ENCODE measurements at regions of chr7 and their contacts with region 1.

Region 1: DNA sequence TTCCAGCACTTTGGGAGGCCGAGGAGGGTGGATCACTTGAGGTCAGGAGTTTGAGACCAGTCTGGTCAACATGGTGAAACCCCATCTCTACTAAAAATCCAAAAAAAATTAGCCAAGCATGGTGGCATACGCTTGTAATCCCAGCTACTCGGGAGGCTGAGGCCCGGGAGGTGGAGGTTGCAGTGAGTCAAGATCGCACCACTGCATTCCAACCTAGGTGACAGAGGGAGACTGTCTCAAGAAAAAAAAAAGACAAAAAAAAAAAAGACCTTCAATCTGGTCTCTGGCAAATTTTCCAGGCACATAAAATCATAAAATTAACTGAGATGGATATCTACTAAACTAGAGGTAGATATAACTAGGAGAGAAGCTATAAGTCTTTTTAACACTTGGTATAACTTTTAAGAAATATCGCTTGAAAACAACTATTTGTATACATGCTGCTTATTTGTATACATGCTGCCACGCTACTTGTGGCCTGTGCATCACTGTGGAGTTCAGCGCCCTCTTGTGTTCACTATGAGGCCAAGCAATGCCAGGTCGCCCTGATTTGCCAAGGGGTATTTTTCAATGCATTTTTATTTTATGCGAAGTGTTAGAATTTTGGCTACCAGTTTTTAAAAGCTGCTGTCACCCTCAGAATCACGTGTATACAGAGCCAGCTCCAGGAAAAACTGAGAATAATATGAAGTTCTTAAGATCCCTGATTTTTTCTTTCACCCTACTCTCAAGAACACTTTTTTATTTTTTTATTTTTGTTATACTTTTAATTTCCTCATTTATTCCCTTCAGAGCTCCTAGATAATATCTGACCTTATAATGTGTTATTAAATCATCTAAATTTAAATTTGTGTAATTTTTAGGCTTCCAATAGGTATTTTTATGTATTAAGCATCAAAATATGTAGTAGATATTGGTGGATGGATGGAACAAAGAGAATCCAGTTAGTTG is 26.7 kb downstream of the CYCS start:
- DNase-seq: peak; percentile 81 to 83
- ATAC-seq: peak; percentile 72 to 81; a peak in 3 of 6 replicates
- H3K4me3 ChIP-seq: no peak overlapping the region
- H3K27ac ChIP-seq: 0 out of 6 replicates have a peak overlapping the region, but pooled peaks of 1 of the 2 experiments have one; percentile 21
- H3K4me1 ChIP-seq: peaks cover 6% of the 10 kb centered on the region; the same call in 1 of the 3 replicates
- CTCF ChIP-seq: peak; percentile 95
- EP300 ChIP-seq: no peak
- POLR2A ChIP-seq: no peak
- RAD21 ChIP-seq: peak; percentile 85 to 88

Region 2: DNA sequence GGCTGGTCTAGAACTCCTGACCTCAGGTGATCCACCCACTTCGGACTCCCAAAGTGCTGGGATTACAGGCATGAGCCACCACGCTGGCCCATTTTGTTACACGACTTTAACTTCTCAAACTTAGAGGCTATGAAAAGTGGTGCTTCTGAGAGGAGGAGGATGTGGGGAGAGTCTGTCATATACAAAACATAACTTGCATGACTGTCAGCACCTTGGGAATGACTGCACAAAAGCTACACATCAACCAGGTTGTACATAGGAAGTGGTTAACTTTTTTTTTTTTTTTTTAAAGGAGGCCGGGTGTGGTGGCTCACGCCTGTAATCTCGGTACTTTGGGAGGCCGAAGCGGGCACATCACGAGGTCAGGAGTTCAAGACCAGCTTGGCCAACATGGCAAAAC is 297.7 kb before region 1 on chr7:
- CTCF ChIA-PET with region 1: interaction called, 280 read pairs
- POLR2A ChIA-PET with region 1: no interaction called
- DNase-seq: no peak
- ATAC-seq: no peak
- H3K4me3 ChIP-seq: no peak overlapping the region
- H3K27ac ChIP-seq: no peak overlapping the region
- H3K4me1 ChIP-seq: no peaks in the 10 kb centered on the region
- CTCF ChIP-seq: no peak
- EP300 ChIP-seq: no peak
- POLR2A ChIP-seq: no peak
- RAD21 ChIP-seq: no peak

Region 3: GRCh38 chr7:24825931-24826661 is 272.3 kb before region 1 on chr7:
- CTCF ChIA-PET with region 1: interaction called, 84 read pairs
- POLR2A ChIA-PET with region 1: interaction called, 15 read pairs
- DNase-seq: peak; percentile 82 to 86
- ATAC-seq: peak; percentile 80 to 89; a peak in 5 of 6 replicates
- H3K4me3 ChIP-seq: no peak overlapping the region
- H3K27ac ChIP-seq: peak overlapping the region; percentile 77 to 85
- H3K4me1 ChIP-seq: peaks cover 59% of the 10 kb centered on the region
- CTCF ChIP-seq: no peak
- EP300 ChIP-seq: no peak
- POLR2A ChIP-seq: no peak
- RAD21 ChIP-seq: no peak

Region 4: DNA sequence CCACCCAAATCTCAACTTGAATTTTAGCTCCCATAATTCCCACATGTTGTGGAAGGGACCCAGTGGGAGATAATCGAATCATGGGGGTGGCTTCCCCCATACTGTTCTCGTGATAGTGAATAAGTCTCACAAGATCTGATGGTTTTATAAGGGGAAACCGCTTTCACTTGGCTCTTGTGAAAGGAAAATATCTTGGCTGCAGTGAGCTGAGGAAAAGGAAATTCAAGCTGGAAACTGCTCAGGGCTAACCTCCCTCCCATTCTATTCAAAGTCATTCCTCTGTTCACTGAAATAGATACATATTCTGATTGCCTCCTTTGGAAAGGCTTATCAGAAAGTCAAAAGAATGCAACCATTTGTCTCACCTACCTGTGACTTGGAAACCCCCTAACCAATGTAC is 10.9 kb after region 1 on chr7:
- CTCF ChIA-PET with region 1: interaction called, 26 read pairs
- POLR2A ChIA-PET with region 1: no interaction called
- DNase-seq: no peak
- ATAC-seq: no peak
- H3K4me3 ChIP-seq: no peak overlapping the region
- H3K27ac ChIP-seq: no peak overlapping the region
- H3K4me1 ChIP-seq: no peaks in the 10 kb centered on the region
- CTCF ChIP-seq: no peak
- EP300 ChIP-seq: no peak
- POLR2A ChIP-seq: no peak
- RAD21 ChIP-seq: no peak

Region 5: GRCh38 chr7:25125137-25125946 is 27.0 kb after region 1 on chr7 and contains the start of gene CYCS:
- CTCF ChIA-PET with region 1: interaction called, 10 read pairs
- POLR2A ChIA-PET with region 1: interaction called, 5 read pairs
- DNase-seq: peak; percentile 89 to 100
- ATAC-seq: peak; percentile 95 to 96
- H3K4me3 ChIP-seq: peak within 1 kb of the TSS; percentile 98
- H3K27ac ChIP-seq: peak within 1 kb of the TSS; percentile 97 to 98
- H3K4me1 ChIP-seq: peaks cover 8% of the 10 kb centered on the region; the same call in 2 of the 3 replicates
- CTCF ChIP-seq: no peak
- EP300 ChIP-seq: no peak
- POLR2A ChIP-seq: peak; percentile 99
- RAD21 ChIP-seq: no peak
- polyA plus RNA-seq, gene CYCS: 196 and 235 TPM in 2 replicates